Natural killer cell (primary cell): ENCODE measurements at regions of chr1 and their contacts with region 1.

Region 1: DNA sequence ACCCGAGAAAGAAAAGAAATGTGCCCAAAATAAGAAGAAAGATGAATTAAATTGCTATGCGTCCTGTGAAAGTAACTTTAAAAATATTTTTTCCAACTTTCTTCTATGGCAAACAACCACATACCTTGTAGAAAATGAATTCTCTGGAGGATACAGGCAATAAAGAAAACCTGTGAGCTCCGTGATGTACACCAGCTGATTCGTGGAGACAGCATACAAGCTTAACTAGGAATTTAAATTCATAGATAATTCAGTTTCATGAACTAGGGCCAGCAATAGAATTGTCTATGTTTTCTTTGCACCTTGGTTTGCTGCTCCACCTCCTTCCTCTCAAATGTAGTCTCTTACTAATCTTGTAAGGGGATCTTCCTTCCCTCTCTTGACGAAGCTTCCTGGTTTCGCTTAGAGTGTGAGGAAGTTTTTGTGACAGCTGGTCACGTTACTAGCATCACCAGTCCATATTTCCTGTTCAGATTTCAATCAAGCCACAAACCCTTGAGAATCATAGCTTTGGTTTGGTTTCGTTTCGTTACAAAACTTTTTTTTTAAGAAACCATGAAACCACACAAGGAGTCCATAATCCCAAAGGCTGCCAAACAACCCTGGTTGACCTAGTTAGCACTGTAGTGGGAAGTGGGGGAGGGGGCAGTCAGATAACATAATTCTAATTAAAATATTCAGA is 35.8 kb downstream of the GREM2 start:
- DNase-seq: peak in 1 of 2 donors; percentile 78
- ATAC-seq: peak; percentile 94 to 97 (median 95)
- H3K4me3 ChIP-seq: peak overlapping the region; percentile 7
- H3K4me3 Mint-ChIP-seq: peak overlapping the region; percentile 82
- H3K27ac ChIP-seq: peak overlapping the region; percentile 73
- H3K27ac Mint-ChIP-seq: peak overlapping the region; percentile 84 to 92
- H3K4me1 ChIP-seq: peaks cover 5% of the 10 kb centered on the region
- H3K4me1 Mint-ChIP-seq: peaks cover 22 to 23% of the 10 kb centered on the region in 2 donors
- H3K27me3 ChIP-seq: no peaks in the 10 kb centered on the region
- H3K27me3 Mint-ChIP-seq: peaks cover 2 to 7% of the 10 kb centered on the region in 2 donors
- CTCF ChIP-seq: no peak

Region 2: DNA sequence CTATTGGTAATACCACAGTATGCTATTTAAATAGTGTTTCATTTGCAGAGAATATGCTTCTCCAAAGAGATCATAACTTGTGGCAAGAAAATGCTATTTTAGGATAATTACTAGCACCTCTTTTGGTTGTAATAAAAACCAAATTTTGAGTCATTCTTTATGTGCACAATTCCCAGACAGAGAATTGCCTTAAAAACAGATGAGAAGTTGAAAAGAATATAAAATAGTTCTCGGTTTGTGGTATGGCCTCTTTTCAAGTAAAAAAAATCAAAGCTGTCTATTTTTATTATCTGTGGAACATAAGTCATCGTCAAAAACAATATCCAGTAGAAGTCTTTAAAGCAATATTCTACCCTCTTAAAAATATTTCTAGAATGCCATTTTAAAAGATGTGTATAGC is 150.1 kb before region 1 on chr1:
- intact Hi-C with region 1: no loop called
- DNase-seq: no peak
- ATAC-seq: no peak
- H3K4me3 ChIP-seq: no peak overlapping the region
- H3K4me3 Mint-ChIP-seq: no peak overlapping the region
- H3K27ac ChIP-seq: no peak overlapping the region
- H3K27ac Mint-ChIP-seq: no peak overlapping the region
- H3K4me1 ChIP-seq: no peaks in the 10 kb centered on the region
- H3K4me1 Mint-ChIP-seq: no peaks in the 10 kb centered on the region
- H3K27me3 ChIP-seq: no peaks in the 10 kb centered on the region
- H3K27me3 Mint-ChIP-seq: peaks cover 0 to 26% of the 10 kb centered on the region in 2 donors
- CTCF ChIP-seq: no peak

Region 3: DNA sequence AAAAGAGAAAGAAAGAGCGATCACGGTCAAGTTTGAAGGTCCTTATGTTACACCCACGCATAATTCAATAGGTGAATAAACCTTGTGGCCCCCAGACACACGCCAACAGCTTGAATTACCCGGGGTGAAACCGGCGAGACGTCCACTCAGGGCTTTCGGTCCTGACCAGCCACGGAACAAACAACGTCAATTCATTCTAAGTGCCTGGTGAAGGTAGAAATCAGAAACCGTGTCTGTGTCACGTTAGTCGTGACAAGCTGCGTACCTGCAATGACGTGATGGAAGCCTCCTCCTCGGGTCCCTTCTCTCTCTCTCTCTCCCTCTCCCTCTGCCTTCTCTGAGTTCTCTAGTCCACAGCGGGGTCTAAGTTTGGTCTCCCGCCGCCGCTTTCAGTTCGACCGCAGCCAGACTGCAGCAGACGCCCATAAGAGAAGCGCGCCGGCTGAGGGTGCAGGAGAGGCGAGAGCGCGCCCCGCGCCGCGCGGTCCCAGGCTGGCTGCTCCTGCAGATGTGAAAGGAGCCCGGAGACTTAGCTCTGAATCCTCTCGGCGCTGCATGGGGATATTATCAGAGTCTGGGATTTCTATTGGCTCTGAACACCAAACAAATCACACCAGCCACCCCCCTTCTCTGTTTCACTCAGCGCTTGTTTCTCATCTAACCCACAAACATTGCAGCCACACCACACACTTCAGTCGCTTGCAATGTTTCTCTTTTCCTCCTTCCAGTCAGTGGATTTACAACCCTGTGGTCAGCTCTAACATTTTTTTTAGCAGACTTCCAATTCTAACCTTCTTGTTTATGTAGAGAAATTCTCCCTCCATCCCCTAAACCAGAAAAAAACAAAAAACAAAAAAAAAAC is 35.7 kb after region 1 on chr1 and contains the start of gene GREM2:
- intact Hi-C with region 1: loop called (anchors 2 kb)
- DNase-seq: peak; percentile 39 to 44
- ATAC-seq: peak; percentile 80 to 87 (median 82)
- H3K4me3 ChIP-seq: peak within 1 kb of the TSS; percentile 57
- H3K4me3 Mint-ChIP-seq: peak within 1 kb of the TSS; percentile 99
- H3K27ac ChIP-seq: peak within 1 kb of the TSS; percentile 22
- H3K27ac Mint-ChIP-seq: peak within 1 kb of the TSS; percentile 69 to 81
- H3K4me1 ChIP-seq: peaks cover 22% of the 10 kb centered on the region
- H3K4me1 Mint-ChIP-seq: peaks cover 31 to 41% of the 10 kb centered on the region in 2 donors
- H3K27me3 ChIP-seq: peaks cover 7% of the 10 kb centered on the region
- H3K27me3 Mint-ChIP-seq: peaks cover 47 to 90% of the 10 kb centered on the region in 2 donors
- CTCF ChIP-seq: no peak
- total RNA-seq, gene GREM2: 0.08 to 0.34 TPM in 2 of 3 donors, not detected in the other